Activated CD8-positive, alpha-beta T cell treated with anti-CD3 and anti-CD28 coated beads, Interleukin-2, amount 10 ng/mL, durations not matched to agents 7 days and 5 days (primary cell): ENCODE measurements at regions of chr6 and their contacts with region 1.

Region 1: GRCh38 chr6:3732345-3733141 is 19.0 kb downstream of the PXDC1 start:
- DNase-seq: peak; percentile 69
- ATAC-seq: peak; percentile 69
- H3K4me3 Mint-ChIP-seq: no peak overlapping the region
- H3K27ac Mint-ChIP-seq: no peak overlapping the region
- H3K4me1 Mint-ChIP-seq: peaks cover 3% of the 10 kb centered on the region
- H3K27me3 Mint-ChIP-seq: peaks cover 5% of the 10 kb centered on the region

Region 2: GRCh38 chr6:3281631-3282475 is 450.7 kb before region 1 on chr6:
- CTCF ChIA-PET with region 1: interaction called, 57 read pairs
- POLR2A ChIA-PET with region 1: no interaction called
- DNase-seq: no peak
- ATAC-seq: no peak
- H3K4me3 Mint-ChIP-seq: no peak overlapping the region
- H3K27ac Mint-ChIP-seq: no peak overlapping the region
- H3K4me1 Mint-ChIP-seq: peaks cover 4% of the 10 kb centered on the region
- H3K27me3 Mint-ChIP-seq: no peaks in the 10 kb centered on the region

Region 3: GRCh38 chr6:3410385-3411360 is 321.9 kb before region 1 on chr6:
- CTCF ChIA-PET with region 1: interaction called, 20 read pairs
- POLR2A ChIA-PET with region 1: interaction called, 3 read pairs
- DNase-seq: peak; percentile 72
- ATAC-seq: peak; percentile 73
- H3K4me3 Mint-ChIP-seq: no peak overlapping the region
- H3K27ac Mint-ChIP-seq: no peak overlapping the region
- H3K4me1 Mint-ChIP-seq: peaks cover 11% of the 10 kb centered on the region
- H3K27me3 Mint-ChIP-seq: no peaks in the 10 kb centered on the region

Region 4: GRCh38 chr6:3566812-3567211 is 165.7 kb before region 1 on chr6:
- CTCF ChIA-PET with region 1: no interaction called
- POLR2A ChIA-PET with region 1: no interaction called
- DNase-seq: no peak
- ATAC-seq: no peak
- H3K4me3 Mint-ChIP-seq: no peak overlapping the region
- H3K27ac Mint-ChIP-seq: no peak overlapping the region
- H3K4me1 Mint-ChIP-seq: peaks cover 2% of the 10 kb centered on the region
- H3K27me3 Mint-ChIP-seq: peaks cover 3% of the 10 kb centered on the region

Region 5: DNA sequence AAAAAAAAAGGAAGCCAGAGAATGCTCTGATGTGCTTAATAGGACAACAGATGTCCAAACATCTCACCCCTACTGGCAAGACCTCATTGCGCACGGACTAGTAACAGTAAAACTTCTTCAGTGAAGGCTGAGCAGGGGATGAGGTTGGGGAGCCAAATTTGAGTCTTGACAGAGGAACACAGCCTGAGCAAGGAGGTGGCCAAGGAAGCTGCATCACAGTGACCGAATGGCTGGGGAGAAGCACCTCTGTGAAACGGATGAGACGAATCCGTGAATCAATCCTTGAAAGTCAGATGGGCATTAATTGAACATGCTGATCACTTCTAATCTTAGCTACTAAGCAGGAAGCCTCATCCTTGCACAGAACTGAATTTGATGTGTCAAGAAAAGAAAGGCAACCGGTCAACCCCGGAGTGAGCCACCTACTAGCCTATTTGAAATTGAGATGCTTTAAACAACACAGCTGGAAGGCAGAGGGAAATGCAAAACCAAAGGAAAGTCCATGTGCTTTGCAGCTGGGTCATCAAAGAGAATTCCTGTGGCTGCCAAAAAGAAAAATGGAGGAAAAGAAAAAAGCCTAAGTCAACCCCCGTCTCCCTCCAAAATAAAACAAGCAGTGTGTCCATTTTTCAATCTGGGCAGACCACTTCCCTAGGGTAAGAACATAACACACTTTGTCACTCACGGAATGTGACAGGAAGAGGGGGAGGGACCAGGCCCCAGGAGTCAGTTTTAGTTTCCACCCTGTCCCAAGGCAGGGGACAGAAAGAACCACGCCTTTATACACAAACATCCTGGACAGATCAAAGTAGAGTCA is 10.5 kb before region 1 on chr6:
- CTCF ChIA-PET with region 1: interaction called, 20 read pairs
- POLR2A ChIA-PET with region 1: no interaction called
- DNase-seq: no peak
- ATAC-seq: no peak
- H3K4me3 Mint-ChIP-seq: no peak overlapping the region
- H3K27ac Mint-ChIP-seq: no peak overlapping the region
- H3K4me1 Mint-ChIP-seq: peaks cover 31% of the 10 kb centered on the region
- H3K27me3 Mint-ChIP-seq: no peaks in the 10 kb centered on the region

Region 6: GRCh38 chr6:3742426-3743344 is 10.1 kb after region 1 on chr6:
- CTCF ChIA-PET with region 1: interaction called, 16 read pairs
- POLR2A ChIA-PET with region 1: no interaction called
- DNase-seq: peak; percentile 90
- ATAC-seq: peak; percentile 93
- H3K4me3 Mint-ChIP-seq: no peak overlapping the region
- H3K27ac Mint-ChIP-seq: peak overlapping the region; percentile 57
- H3K4me1 Mint-ChIP-seq: peaks cover 13% of the 10 kb centered on the region
- H3K27me3 Mint-ChIP-seq: peaks cover 8% of the 10 kb centered on the region